Activated B cell treated with CpG ODN at 0.5 μM for 24 hours (primary cell): ENCODE measurements at regions of chr1 and their contacts with region 1.

Region 1: GRCh38 chr1:155859234-155859829 is at the start of gene SYT11:
- DNase-seq: peak; percentile 82
- ATAC-seq: peak; percentile 91
- H3K4me3 Mint-ChIP-seq: peak within 1 kb of the TSS; percentile 98
- H3K27ac Mint-ChIP-seq: peak within 1 kb of the TSS; percentile 97
- H3K4me1 Mint-ChIP-seq: peaks cover 49% of the 10 kb centered on the region
- H3K27me3 Mint-ChIP-seq: peaks cover 2% of the 10 kb centered on the region
- CTCF ChIP-seq: no peak
- total RNA-seq, gene SYT11: 3.3 and 3.7 TPM in 2 replicates

Region 2: GRCh38 chr1:155688324-155689080 is 170.8 kb before region 1 on chr1 and contains the start of gene YY1AP1:
- CTCF ChIA-PET with region 1: no interaction called
- POLR2A ChIA-PET with region 1: no interaction called
- intact Hi-C with region 1: loop called (anchors 1 kb)
- DNase-seq: peak; percentile 92
- ATAC-seq: peak; percentile 85
- H3K4me3 Mint-ChIP-seq: peak within 1 kb of the TSS; percentile 98
- H3K27ac Mint-ChIP-seq: peak within 1 kb of the TSS; percentile 94
- H3K4me1 Mint-ChIP-seq: peaks cover 60% of the 10 kb centered on the region
- H3K27me3 Mint-ChIP-seq: no peaks in the 10 kb centered on the region
- CTCF ChIP-seq: no peak
- total RNA-seq, gene YY1AP1: 89.6 and 101 TPM in 2 replicates

Region 3: DNA sequence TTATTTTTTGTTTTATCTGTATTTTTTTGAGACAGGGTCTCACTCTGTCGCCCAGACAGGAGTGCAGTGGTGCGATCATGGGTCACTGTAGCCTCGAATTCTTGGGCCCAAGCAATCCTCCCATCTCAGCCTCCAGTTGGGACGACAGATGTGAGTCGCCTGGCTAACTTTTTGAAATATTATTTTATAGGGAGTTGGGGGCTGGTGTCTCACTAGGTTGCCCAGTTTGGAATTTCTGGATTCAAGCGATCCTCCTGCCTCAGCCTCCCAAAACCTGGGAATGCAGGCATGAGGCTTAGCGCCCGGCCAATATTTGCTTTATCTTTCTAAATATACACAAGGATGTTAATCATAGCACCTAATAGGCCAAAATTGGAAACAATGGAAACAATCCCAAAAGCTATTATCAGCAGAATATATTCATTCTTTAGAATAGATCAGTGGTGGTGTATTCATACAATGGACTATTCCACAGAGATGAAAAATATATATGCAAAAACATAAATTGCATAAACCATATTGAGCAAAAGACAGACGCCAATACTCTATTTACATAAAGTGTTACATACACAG is 114.5 kb before region 1 on chr1:
- CTCF ChIA-PET with region 1: no interaction called
- POLR2A ChIA-PET with region 1: interaction called, 4 read pairs
- intact Hi-C with region 1: loop called (anchors 2 kb)
- DNase-seq: no peak
- ATAC-seq: no peak
- H3K4me3 Mint-ChIP-seq: peak overlapping the region; percentile 94
- H3K27ac Mint-ChIP-seq: peak overlapping the region; percentile 90
- H3K4me1 Mint-ChIP-seq: peaks cover 6% of the 10 kb centered on the region
- H3K27me3 Mint-ChIP-seq: no peaks in the 10 kb centered on the region
- CTCF ChIP-seq: no peak

Region 4: DNA sequence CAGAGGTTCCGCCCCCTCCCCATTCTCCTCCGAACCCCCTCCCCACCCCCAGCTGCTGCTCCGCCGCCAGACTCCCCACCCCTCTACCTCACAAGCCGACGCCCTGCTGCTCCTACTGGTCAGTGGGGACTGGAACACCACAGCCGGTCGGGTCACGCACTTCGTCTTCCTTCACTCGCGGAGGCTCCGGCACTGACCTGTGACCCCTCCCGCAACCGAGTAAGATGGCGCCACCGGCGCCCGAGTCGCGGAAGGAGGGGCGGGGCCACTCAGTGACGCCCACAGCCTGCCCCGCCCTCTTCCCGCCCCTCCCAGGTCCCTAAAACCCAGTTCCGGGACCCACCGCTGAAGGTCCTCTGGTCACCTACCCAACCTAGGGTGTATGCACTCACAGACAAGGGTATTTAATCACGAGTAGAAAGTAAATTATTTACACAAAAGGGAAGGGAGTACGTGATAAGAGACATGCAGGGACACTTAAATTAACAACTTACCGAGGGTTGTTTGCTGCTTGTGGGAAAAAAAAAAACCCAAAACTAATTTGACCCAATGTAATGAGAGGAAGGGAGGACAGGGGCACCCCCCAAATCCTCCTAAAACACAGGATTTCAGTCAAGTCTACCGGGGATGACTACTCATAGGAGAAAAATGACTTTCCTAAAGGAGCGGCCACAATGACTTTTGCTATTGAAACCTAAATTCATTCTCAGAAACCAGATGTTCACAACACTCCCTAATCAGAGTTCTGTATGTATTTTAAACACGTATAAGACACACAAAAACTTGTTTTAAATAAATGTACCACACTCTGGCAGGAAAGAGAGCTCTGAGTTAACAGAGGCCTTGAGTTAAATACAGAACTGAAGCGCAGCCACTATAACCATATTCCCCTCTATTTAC is 52.1 kb after region 1 on chr1 and contains the start of gene RIT1:
- CTCF ChIA-PET with region 1: no interaction called
- POLR2A ChIA-PET with region 1: interaction called, 3 read pairs
- intact Hi-C with region 1: loop called (anchors 1 kb)
- DNase-seq: peak; percentile 74
- ATAC-seq: peak; percentile 97
- H3K4me3 Mint-ChIP-seq: peak within 1 kb of the TSS; percentile 99
- H3K27ac Mint-ChIP-seq: peak within 1 kb of the TSS; percentile 97
- H3K4me1 Mint-ChIP-seq: peaks cover 22% of the 10 kb centered on the region
- H3K27me3 Mint-ChIP-seq: no peaks in the 10 kb centered on the region
- CTCF ChIP-seq: no peak
- total RNA-seq, gene RIT1: 32.7 and 38.6 TPM in 2 replicates

Region 5: DNA sequence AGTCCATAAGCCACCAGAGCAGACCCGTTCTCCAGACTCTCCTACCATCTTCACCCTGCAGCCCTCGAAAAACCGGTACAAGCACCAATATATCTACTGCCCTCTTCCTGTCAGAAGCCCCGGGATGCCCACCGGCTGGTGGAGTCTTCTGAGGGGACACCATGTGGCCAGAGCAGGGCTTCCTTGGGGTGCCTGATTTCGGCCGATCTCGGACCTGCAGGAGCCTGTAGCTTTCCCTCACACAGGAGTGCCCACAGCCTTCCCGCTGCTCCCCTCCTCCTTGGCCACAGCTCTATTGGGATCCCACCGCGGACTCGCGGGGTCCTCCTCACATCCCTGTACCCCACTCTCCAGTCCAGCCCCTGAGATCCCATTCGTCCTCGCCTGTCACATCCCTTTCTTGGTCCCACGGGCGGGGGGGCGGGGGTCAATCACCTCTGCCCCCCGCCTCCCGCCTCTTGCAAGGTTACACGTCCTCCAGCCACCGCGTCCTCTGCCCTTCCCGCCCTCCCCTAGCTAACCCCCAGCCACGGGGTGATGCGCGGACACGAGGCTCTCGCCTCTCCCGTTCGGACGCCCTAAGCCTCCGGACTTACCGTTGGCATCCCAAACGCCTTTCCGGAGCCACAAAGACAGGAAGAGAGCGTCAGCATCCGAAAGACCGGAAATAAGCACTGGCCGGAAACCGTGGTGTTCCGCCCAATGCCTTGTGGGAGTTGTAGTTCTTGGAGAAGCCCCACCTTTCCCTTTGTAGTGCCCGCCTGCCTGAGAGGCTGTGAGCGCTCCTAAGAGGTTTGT is 161.2 kb after region 1 on chr1 and contains the start of gene SSR2:
- CTCF ChIA-PET with region 1: no interaction called
- POLR2A ChIA-PET with region 1: no interaction called
- intact Hi-C with region 1: loop called (anchors 2 kb)
- DNase-seq: peak; percentile 65
- ATAC-seq: peak; percentile 99
- H3K4me3 Mint-ChIP-seq: peak within 1 kb of the TSS; percentile 98
- H3K27ac Mint-ChIP-seq: peak within 1 kb of the TSS; percentile 93
- H3K4me1 Mint-ChIP-seq: peaks cover 22% of the 10 kb centered on the region
- H3K27me3 Mint-ChIP-seq: peaks cover 5% of the 10 kb centered on the region
- CTCF ChIP-seq: no peak
- total RNA-seq, gene SSR2: 136 and 146 TPM in 2 replicates